Gastrocnemius medialis (tissue), 4 donors: ENCODE measurements at regions of chr11 and their contacts with region 1.

Region 1: GRCh38 chr11:124953753-124954589 is at the start of gene CCDC15:
- DNase-seq: peak; percentile 94 to 95
- ATAC-seq: peak; percentile 99 to 100
- H3K4me3 ChIP-seq: peak within 1 kb of the TSS; percentile 53 to 89 (median 79)
- H3K27ac ChIP-seq: peak within 1 kb of the TSS; percentile 77 to 81 (median 78)
- H3K4me1 ChIP-seq: peaks cover 6 to 8% of the 10 kb centered on the region in 2 donors
- H3K27me3 ChIP-seq: no peaks in the 10 kb centered on the region
- CTCF ChIP-seq: no peak
- POLR2A ChIP-seq: peak; percentile 48 to 58
- total RNA-seq, gene CCDC15: 0.10 to 0.16 TPM in 2 of 4 donors, not detected in the others

Region 2: GRCh38 chr11:124673333-124674167 is 280.4 kb before region 1 on chr11 and contains the starts of genes SIAE and SPA17:
- in situ Hi-C with region 1: no loop called
- intact Hi-C with region 1: loop called (anchors 5 kb)
- DNase-seq: peak; percentile 85 to 90
- ATAC-seq: peak; percentile 87 to 92
- H3K4me3 ChIP-seq: peak within 1 kb of the TSS; percentile 70 to 84 (median 76)
- H3K27ac ChIP-seq: peak within 1 kb of the TSS; percentile 77 to 83 (median 82)
- H3K4me1 ChIP-seq: peaks cover 15 to 17% of the 10 kb centered on the region in 2 donors
- H3K27me3 ChIP-seq: no peaks in the 10 kb centered on the region
- CTCF ChIP-seq: peak in 2 of 5 experiments; percentile 6 to 10
- POLR2A ChIP-seq: peak; percentile 25 to 36
- total RNA-seq, gene SIAE: 8.2 to 12.7 (median 10.1) TPM
- total RNA-seq, gene SPA17: 0.38 to 2.0 (median 0.44) TPM in 3 of 4 donors, not detected in the other

Region 3: GRCh38 chr11:124693142-124693541 is 260.8 kb before region 1 on chr11:
- in situ Hi-C with region 1: no loop called
- intact Hi-C with region 1: no loop called
- DNase-seq: no peak
- ATAC-seq: no peak
- H3K4me3 ChIP-seq: no peak overlapping the region
- H3K27ac ChIP-seq: no peak overlapping the region
- H3K4me1 ChIP-seq: no peaks in the 10 kb centered on the region
- H3K27me3 ChIP-seq: no peaks in the 10 kb centered on the region
- CTCF ChIP-seq: no peak
- POLR2A ChIP-seq: no peak

Region 4: GRCh38 chr11:124875943-124876817 is 77.8 kb before region 1 on chr11:
- in situ Hi-C with region 1: no loop called
- intact Hi-C with region 1: loop called (anchors 5 kb)
- DNase-seq: peak; percentile 54 to 70
- ATAC-seq: peak; percentile 91
- H3K4me3 ChIP-seq: peak overlapping the region; percentile 60 to 93 (median 64)
- H3K27ac ChIP-seq: peak overlapping the region; percentile 72 to 88 (median 76)
- H3K4me1 ChIP-seq: peaks cover 0 to 13% of the 10 kb centered on the region in 2 donors
- H3K27me3 ChIP-seq: peaks cover 13 to 30% (median 22%) of the 10 kb centered on the region in 3 donors
- CTCF ChIP-seq: peak; percentile 43 to 71 (median 62)
- POLR2A ChIP-seq: peak; percentile 11 to 26

Region 5: GRCh38 chr11:125141686-125142535 is 187.9 kb after region 1 on chr11:
- in situ Hi-C with region 1: loop called in 1 of 4 experiments (anchors 25 kb)
- intact Hi-C with region 1: no loop called
- DNase-seq: no peak
- ATAC-seq: peak; percentile 9 to 83
- H3K4me3 ChIP-seq: no peak overlapping the region
- H3K27ac ChIP-seq: no peak overlapping the region
- H3K4me1 ChIP-seq: peaks cover 0 to 4% of the 10 kb centered on the region in 2 donors
- H3K27me3 ChIP-seq: peaks cover 0 to 8% (median 6%) of the 10 kb centered on the region in 3 donors
- CTCF ChIP-seq: peak; percentile 84 to 95 (median 88)
- POLR2A ChIP-seq: no peak

Region 6: GRCh38 chr11:125180413-125181305 is 226.7 kb after region 1 on chr11:
- in situ Hi-C with region 1: no loop called
- intact Hi-C with region 1: no loop called
- DNase-seq: no peak
- ATAC-seq: no peak
- H3K4me3 ChIP-seq: no peak overlapping the region
- H3K27ac ChIP-seq: no peak overlapping the region
- H3K4me1 ChIP-seq: peaks cover 15 to 23% of the 10 kb centered on the region in 2 donors
- H3K27me3 ChIP-seq: no peaks in the 10 kb centered on the region
- CTCF ChIP-seq: no peak
- POLR2A ChIP-seq: no peak

Region 7: DNA sequence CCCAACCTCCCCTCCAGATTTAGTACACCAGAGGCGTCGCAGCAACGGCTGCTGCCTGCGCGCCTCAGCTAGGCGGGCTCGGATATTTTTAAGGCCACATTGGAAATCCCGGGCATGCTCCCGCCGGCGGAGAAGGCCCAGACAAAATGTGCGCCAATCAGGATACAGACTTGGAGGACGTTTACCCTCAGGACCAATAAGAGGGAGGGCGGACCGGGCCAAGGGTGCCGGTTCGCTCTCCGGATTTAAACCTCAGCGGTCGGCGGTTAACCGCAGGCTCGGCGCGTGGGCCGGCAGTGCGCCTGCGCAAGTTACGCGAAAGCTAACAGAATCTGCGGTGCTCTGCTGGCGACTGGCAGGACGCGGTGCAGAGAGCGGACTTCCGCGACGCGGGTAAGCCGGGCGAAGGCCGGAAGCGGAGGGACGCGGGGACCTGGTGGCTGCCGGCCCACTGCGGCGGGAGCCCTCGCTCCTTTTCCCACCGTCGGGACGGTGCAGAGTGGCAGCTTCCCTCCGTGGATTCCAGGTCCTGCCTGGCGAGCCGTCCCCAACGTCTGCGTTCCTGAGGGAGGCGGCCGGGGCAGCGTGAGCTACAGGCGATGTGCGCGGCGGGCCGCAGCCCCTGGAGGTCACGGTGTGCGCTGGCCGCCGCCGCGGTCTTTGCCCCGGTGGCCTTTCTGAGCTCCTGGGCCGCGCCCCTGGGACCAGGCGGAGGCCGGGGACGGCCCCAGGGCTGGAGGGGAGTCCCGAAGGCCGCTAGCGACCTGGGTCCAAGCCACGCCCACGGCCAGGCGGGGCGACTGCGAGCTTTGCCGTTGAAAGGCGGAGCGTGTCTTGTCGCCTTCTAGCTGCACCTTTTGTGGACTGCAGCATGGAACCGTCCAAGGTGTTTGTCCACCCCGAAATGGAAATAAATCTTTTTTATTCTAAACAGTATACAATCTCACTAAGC is 933.7 kb after region 1 on chr11 and contains the start of gene HYLS1:
- in situ Hi-C with region 1: loop called in 1 of 4 experiments (anchors 25 kb)
- intact Hi-C with region 1: no loop called
- DNase-seq: peak; percentile 91 to 92
- ATAC-seq: peak; percentile 97
- H3K4me3 ChIP-seq: peak within 1 kb of the TSS; percentile 66 to 93 (median 80)
- H3K27ac ChIP-seq: peak within 1 kb of the TSS; percentile 81 to 95 (median 92)
- H3K4me1 ChIP-seq: peaks cover 0 to 5% of the 10 kb centered on the region in 2 donors
- H3K27me3 ChIP-seq: no peaks in the 10 kb centered on the region
- CTCF ChIP-seq: peak in 4 of 5 experiments; percentile 11 to 51 (median 40)
- POLR2A ChIP-seq: peak; percentile 52 to 76
- total RNA-seq, gene HYLS1: 0.56 to 3.9 (median 1.9) TPM